Activated naive CD8-positive, alpha-beta T cell treated with anti-CD3 and anti-CD28 coated beads, Interleukin-2, amount 10 ng/mL, durations not matched to agents 7 days and 5 days (primary cell): ENCODE measurements at regions of chr7 and their contacts with region 1.

Region 1: GRCh38 chr7:10973061-10973944 is at the start of gene PHF14:
- DNase-seq: peak; percentile 94
- ATAC-seq: peak; percentile 99
- H3K4me3 Mint-ChIP-seq: peak within 1 kb of the TSS; percentile 94
- H3K27ac Mint-ChIP-seq: peak within 1 kb of the TSS; percentile 96
- H3K4me1 Mint-ChIP-seq: peaks cover 32% of the 10 kb centered on the region
- H3K27me3 Mint-ChIP-seq: peaks cover 16% of the 10 kb centered on the region
- total RNA-seq, gene PHF14: 35.6 to 38.0 TPM

Region 2: GRCh38 chr7:10924366-10924765 is 48.9 kb before region 1 on chr7:
- POLR2A ChIA-PET with region 1: no interaction called
- DNase-seq: no peak
- ATAC-seq: no peak
- H3K4me3 Mint-ChIP-seq: no peak overlapping the region
- H3K27ac Mint-ChIP-seq: no peak overlapping the region
- H3K4me1 Mint-ChIP-seq: no peaks in the 10 kb centered on the region
- H3K27me3 Mint-ChIP-seq: peaks cover 2% of the 10 kb centered on the region

Region 3: DNA sequence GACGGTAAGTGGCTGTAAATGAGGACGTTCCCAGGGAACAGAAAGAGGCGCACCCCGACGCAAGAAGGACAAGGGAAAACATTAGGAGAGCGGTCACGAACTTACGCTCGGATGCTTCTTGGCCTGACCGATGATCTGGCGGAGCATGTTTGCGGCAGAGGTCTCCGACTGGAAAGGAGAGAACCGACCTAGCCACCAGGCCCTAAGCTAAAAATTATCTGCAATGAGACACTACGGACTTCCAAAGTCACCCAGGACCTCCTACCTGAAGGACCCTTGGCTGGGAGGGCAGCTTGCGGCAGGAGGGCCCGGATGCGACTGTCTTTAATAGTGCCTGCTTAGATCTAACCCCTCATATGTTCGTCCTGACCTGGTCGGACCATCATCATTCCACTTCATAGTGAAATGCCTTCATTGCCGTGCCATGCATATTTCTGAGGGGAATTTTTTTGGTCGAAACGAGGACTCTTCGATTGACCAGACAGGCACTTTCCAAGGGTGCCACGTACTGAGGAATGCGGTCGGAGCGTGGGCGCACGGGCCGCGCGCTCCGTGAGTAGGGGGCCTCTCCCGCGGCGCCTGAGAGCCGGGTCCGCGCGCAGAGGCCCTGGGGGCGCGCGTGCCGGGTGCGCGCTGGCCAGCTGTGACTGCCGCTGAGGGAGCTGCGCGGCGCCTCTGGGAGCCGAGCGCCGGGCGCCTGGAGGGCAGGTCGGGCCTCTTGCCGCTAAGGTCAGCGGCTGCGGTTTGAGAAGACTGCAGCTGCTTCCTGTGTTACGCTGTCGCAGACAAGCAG is 33.2 kb before region 1 on chr7:
- POLR2A ChIA-PET with region 1: interaction called, 41 read pairs
- DNase-seq: peak; percentile 93
- ATAC-seq: peak; percentile 93
- H3K4me3 Mint-ChIP-seq: no peak overlapping the region
- H3K27ac Mint-ChIP-seq: no peak overlapping the region
- H3K4me1 Mint-ChIP-seq: peaks cover 12% of the 10 kb centered on the region
- H3K27me3 Mint-ChIP-seq: no peaks in the 10 kb centered on the region

Region 4: DNA sequence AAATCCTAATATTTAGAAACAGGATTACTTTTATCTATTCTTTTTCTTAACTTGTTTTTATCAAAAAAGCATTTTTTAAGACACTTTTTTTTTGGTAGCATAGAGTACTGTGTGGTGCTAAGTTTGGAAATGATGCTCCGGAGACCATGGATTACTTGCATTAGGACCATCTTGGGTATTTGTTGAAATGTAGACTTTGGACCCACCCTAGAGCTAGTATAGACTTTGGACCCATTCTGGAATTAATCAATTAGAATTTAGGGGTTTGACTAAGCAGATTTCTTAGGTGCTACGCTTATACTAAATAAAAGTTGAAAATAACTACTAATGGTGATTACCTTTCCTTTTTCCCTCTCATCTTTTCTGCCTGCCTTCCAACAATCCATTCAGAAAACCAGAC is 80.7 kb after region 1 on chr7:
- POLR2A ChIA-PET with region 1: no interaction called
- DNase-seq: no peak
- ATAC-seq: no peak
- H3K4me3 Mint-ChIP-seq: no peak overlapping the region
- H3K27ac Mint-ChIP-seq: no peak overlapping the region
- H3K4me1 Mint-ChIP-seq: no peaks in the 10 kb centered on the region
- H3K27me3 Mint-ChIP-seq: no peaks in the 10 kb centered on the region